Esophagus squamous epithelium (tissue), 5 donors: ENCODE measurements at regions of chr5 and their contacts with region 1.

Region 1: DNA sequence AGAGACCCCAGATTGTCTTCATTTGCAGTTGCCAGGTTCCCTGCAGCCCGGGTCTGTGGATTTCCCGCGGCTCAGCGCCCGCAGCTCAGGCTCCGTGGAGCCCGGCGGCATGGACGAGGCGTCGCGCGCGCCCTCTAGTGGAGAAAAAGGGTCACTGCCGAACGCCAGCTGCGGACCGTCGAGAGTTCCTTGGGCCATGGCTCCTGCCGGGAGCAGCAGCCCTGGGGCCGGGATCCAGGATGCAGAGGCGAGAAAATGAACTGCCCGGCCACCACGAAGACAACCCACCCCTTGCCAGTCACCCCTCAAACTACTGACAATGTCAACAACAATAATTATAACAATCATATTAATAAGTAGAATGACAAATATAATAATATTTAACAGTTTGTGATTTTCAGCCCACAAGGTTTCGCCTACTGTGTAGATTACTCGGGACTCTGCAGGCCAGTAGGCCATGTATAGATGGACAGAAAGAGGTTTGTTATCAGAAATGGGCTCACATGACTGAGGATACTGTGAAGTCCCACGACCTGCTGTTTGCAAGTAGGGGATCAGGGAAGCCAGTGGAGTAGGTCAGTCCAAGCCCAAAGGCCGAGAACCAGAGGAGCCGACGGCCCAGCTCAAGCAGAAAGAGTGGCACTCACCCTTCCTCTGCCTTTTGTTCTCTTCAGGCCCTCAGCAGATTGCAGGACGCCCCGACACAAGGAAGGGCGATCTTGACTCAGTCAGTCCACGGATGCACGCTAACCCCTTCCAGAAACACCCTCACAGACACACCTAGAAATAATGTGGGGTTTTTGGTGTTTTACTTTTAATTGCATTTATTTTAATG is 43.1 kb downstream of the BOD1 start:
- DNase-seq: no peak
- H3K4me3 ChIP-seq: peak overlapping the region in 1 of 4 donors; percentile 36
- H3K27ac ChIP-seq: no peak overlapping the region
- H3K4me1 ChIP-seq: peaks cover 0 to 15% (median 4%) of the 10 kb centered on the region in 3 donors
- H3K27me3 ChIP-seq: peaks cover 0 to 8% (median 0%) of the 10 kb centered on the region in 4 donors
- CTCF ChIP-seq: peak; percentile 88 to 98 (median 96)
- POLR2A ChIP-seq: no peak

Region 2: DNA sequence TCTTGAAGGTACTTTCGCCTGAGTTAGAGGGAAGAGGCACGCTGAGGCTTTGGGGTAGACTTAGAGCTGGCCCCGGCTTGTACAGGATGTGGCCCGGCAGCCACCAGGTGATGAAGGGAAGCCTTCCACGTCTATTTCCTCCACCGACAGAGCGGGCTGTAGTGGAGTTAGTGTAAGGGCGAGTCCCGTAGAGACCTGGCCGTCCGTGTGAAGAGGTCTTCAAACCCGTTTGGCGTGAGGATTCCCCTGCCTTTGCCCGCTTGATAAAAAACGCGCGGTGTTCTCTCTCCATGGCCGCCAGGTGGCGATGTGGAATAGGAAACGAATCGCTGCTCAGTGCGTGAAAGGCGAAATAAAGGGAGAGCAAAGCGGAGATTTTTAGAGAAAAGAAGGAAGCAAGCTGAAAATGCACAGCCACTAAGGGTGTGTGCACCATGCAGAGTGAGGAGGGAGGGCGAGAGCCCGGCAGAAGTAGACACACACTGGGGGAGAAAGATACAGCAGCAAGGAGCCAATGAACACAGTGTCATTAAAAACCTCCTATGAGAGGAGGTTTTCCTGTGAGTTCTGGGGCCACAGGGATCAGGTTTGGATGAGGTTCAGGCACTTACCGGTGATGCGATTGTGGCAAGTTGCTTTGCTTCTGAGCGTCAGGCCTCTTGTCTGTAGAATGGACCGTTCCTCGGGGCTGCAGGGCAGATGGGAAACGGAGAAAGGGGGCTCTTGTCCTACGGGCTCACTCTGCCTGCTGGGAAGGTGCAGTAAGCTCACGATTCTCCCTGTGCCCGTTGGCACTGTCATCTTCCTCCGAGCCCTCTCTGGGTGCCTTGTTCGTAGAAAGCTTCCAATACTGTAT is 279.3 kb before region 1 on chr5:
- intact Hi-C with region 1: loop called (anchors 5 kb)
- DNase-seq: peak; percentile 9
- H3K4me3 ChIP-seq: peak overlapping the region in 2 of 4 donors; percentile 4 to 5
- H3K27ac ChIP-seq: no peak overlapping the region
- H3K4me1 ChIP-seq: peaks cover 0 to 22% (median 8%) of the 10 kb centered on the region in 3 donors
- H3K27me3 ChIP-seq: peaks cover 0 to 48% (median 1%) of the 10 kb centered on the region in 4 donors
- CTCF ChIP-seq: peak; percentile 79 to 92 (median 89)
- POLR2A ChIP-seq: no peak

Region 3: DNA sequence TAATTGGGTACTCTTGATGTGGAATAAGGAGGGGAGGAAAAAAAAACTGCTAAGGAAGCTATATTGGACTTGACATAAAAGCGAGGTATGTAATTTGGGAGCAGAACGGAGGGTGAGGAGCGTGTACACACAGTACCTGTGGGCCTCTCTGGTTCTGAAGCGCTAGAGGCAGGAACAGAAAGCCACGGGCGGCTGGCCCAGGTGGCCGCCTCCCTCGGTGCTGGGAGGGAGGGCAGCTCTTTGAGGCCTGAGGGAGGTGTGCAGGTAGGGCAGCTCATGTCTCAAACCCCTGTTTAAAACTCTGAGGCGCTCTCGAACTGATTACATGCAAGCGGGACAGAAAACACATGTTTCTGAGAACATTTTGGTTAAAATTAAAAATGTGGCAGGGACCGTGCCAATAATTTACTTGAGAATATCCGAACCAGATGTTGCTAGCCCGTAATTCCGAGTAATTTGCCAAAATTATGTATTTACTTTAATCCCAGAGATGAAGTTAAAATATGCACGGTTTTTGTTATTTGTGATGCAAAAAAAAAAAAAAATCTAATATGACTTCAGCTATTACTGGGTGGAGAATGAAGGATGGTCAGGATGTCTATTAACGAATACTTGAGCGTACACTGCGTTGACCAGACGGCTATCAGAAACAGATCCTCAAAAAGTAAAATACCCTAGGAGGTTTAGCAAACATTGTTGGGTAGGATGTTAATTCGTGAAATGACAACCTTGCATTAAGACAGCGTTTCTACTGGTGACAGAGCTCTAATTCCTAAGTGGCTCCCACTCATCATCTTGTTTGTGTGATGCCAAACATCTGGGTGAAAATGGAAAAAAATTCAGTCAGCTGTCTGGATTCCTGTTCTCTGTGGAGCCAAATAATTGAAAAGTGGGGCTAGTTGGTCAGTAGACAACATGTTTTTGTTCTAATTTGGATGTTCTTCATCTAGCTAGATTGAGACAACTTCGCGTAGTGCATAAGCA is 220.7 kb before region 1 on chr5:
- intact Hi-C with region 1: no loop called
- DNase-seq: no peak
- H3K4me3 ChIP-seq: no peak overlapping the region
- H3K27ac ChIP-seq: no peak overlapping the region
- H3K4me1 ChIP-seq: no peaks in the 10 kb centered on the region
- H3K27me3 ChIP-seq: peaks cover 0 to 3% (median 0%) of the 10 kb centered on the region in 4 donors
- CTCF ChIP-seq: no peak
- POLR2A ChIP-seq: no peak

Region 4: GRCh38 chr5:173451031-173451430 is 122.3 kb before region 1 on chr5:
- intact Hi-C with region 1: loop called (anchors 10 kb)
- DNase-seq: no peak
- H3K4me3 ChIP-seq: no peak overlapping the region
- H3K27ac ChIP-seq: no peak overlapping the region
- H3K4me1 ChIP-seq: peaks cover 0 to 16% (median 0%) of the 10 kb centered on the region in 3 donors
- H3K27me3 ChIP-seq: no peaks in the 10 kb centered on the region
- CTCF ChIP-seq: peak in 4 of 6 experiments; percentile 19 to 44 (median 26)
- POLR2A ChIP-seq: no peak